Activated B cell treated with CpG ODN at 0.5 μM for 24 hours (primary cell): ENCODE measurements at regions of chr10 and their contacts with region 1.

Region 1: GRCh38 chr10:93482145-93482834 is at the start of gene MYOF:
- DNase-seq: no peak
- ATAC-seq: peak; percentile 91
- H3K4me3 Mint-ChIP-seq: peak within 1 kb of the TSS; percentile 81
- H3K27ac Mint-ChIP-seq: peak within 1 kb of the TSS; percentile 4
- H3K4me1 Mint-ChIP-seq: peaks cover 15% of the 10 kb centered on the region
- H3K27me3 Mint-ChIP-seq: peaks cover 9% of the 10 kb centered on the region
- CTCF ChIP-seq: no peak
- total RNA-seq, gene MYOF: 0.09 and 0.15 TPM in 2 replicates

Region 2: DNA sequence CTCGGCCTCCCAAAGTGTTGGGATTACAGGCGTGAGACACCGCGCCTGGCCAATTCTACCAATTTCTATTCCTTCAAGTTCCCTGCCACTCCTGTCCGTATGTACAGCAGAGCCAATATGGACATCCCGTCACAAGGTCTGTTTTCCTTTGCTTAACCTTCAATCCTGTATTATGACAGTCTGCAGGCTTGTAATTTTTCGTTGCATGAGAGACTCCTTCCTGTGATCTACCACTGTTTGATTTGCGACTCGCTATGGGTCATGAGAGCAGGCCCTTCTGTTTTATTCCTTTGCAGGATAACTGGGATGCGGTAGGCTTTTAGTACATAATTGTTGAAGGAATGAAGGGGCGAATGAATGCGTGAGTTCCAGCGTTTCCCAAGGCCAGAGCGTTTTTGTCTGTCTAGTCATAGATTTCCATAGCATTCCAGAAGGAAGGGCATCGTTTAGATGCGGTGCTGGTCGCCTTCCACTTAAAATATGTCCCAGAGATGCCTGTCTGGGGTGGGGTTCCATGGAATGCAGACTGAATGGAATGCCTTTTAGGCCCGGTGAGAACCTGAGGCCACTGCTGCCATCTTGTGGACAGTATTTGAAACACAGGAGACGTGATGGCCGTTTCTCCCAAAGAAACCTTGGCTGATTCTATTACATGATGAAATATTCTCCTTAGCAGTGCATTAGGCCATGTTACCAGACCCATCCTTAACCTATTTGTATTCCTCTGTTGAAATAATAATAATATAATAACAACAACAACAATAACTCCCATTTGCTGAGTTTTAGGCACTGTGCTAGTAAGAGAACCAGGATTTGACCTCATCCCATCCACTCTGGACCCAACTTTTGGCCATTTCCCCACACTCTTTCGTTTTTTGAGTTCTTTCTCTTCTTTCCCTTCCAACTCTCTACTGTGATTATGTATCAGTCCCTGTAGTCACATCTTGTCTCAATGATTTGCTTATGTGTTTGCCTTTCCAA is 193.3 kb before region 1 on chr10:
- CTCF ChIA-PET with region 1: no interaction called
- POLR2A ChIA-PET with region 1: interaction called, 9 read pairs
- intact Hi-C with region 1: loop called (anchors 10 kb)
- DNase-seq: peak; percentile 19
- ATAC-seq: no peak
- H3K4me3 Mint-ChIP-seq: no peak overlapping the region
- H3K27ac Mint-ChIP-seq: no peak overlapping the region
- H3K4me1 Mint-ChIP-seq: no peaks in the 10 kb centered on the region
- H3K27me3 Mint-ChIP-seq: no peaks in the 10 kb centered on the region
- CTCF ChIP-seq: peak; percentile 62

Region 3: DNA sequence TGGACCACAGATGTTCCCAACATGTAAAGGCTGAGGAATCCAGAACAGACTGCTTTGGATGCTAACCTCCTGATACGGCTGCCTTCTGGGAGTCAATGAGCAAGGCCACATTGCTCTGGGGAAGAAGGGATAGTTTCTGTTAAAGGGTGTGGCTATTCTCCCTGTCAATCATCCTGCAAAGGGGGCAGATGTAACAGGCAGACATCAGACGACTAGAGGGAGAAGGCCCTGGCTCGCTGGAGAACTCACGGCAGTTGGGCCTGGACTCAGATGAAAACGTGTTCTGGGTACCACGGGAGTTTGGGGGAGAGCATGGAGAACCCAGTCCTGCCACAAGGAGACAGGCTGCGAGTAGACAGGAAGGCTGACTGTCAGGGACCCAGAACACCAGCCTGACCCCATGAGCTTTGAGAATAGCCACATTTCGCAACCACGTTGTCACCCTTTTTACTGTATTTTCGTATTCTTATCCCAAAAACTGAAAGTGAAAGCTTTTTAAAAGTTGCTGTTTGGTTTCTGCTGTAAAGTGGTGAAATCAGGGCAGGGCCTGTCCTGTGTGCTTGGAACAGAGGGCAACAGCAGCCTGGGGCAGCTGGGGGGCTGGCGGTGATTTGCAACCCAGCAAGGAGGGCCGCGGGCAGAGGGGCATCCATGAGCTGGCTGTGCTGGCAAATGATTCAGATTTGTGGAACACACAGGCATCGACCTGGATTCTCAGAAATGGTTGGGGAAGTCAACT is 95.5 kb before region 1 on chr10:
- CTCF ChIA-PET with region 1: interaction called, 11 read pairs
- POLR2A ChIA-PET with region 1: no interaction called
- intact Hi-C with region 1: no loop called
- DNase-seq: no peak
- ATAC-seq: no peak
- H3K4me3 Mint-ChIP-seq: no peak overlapping the region
- H3K27ac Mint-ChIP-seq: no peak overlapping the region
- H3K4me1 Mint-ChIP-seq: peaks cover 24% of the 10 kb centered on the region
- H3K27me3 Mint-ChIP-seq: no peaks in the 10 kb centered on the region
- CTCF ChIP-seq: no peak

Region 4: DNA sequence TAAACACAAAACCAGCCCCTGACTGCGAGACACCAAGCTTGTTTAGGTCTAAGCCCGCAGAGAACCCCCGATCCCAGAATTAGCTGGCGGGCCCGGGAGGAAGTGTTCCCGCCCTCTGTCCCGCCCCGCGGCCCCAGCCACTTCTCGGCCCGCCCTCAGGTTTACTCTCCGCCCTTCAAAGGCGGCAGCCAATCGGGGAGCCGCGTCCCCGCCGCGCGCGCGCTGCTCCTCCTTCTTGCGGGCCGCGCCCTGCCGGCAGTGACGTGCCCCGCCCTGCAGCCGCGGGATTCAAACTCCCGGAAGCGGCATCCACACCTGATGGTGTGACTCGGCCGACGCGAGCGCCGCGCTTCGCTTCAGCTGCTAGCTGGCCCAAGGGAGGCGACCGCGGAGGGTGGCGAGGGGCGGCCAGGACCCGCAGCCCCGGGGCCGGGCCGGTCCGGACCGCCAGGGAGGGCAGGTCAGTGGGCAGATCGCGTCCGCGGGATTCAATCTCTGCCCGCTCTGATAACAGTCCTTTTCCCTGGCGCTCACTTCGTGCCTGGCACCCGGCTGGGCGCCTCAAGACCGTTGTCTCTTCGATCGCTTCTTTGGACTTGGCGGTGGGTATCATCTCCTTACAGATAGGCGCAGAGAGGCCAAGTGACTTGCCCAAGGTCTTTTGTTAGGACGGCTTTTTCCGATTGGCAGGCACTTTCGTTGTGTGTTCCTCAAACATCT is 14.2 kb after region 1 on chr10 and contains the start of gene CEP55:
- CTCF ChIA-PET with region 1: interaction called, 9 read pairs
- POLR2A ChIA-PET with region 1: interaction called, 3 read pairs
- intact Hi-C with region 1: loop called (anchors 1 kb)
- DNase-seq: peak; percentile 94
- ATAC-seq: peak; percentile 100
- H3K4me3 Mint-ChIP-seq: peak within 1 kb of the TSS; percentile 92
- H3K27ac Mint-ChIP-seq: peak within 1 kb of the TSS; percentile 74
- H3K4me1 Mint-ChIP-seq: peaks cover 16% of the 10 kb centered on the region
- H3K27me3 Mint-ChIP-seq: no peaks in the 10 kb centered on the region
- CTCF ChIP-seq: no peak
- total RNA-seq, gene CEP55: 0.95 and 1.6 TPM in 2 replicates

Region 5: GRCh38 chr10:93566435-93567276 is 84.4 kb after region 1 on chr10 and contains the start of gene FFAR4:
- CTCF ChIA-PET with region 1: no interaction called
- POLR2A ChIA-PET with region 1: no interaction called
- intact Hi-C with region 1: no loop called
- DNase-seq: no peak
- ATAC-seq: no peak
- H3K4me3 Mint-ChIP-seq: no peak within 1 kb of the TSS
- H3K27ac Mint-ChIP-seq: no peak within 1 kb of the TSS
- H3K4me1 Mint-ChIP-seq: peaks cover 3% of the 10 kb centered on the region
- H3K27me3 Mint-ChIP-seq: peaks cover 53% of the 10 kb centered on the region
- CTCF ChIP-seq: no peak
- total RNA-seq, gene FFAR4: not detected in 2 replicates